GM13977 (cell line): ENCODE measurements at regions of chr1 and their contacts with region 1.

Region 1: DNA sequence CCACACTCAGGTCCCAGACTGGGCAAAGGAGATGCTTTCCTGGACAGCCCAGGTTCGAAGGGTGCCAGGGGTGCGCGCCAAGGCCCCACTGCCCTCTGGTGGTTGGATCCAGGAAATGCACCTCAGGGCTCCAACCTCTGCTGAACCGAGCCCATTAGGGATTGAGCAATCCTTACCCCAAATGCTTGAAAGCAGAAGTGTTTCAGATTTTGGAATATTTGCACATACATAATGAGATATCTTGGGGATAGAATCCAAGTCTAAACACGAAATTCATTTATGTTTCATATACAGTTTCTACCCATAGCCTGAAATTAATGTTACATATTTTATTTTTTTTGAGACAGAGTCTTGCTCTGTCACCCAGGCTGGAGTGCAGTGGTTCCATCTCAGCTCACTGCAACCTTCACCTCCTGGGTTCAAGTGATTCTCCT is 57.4 kb downstream of the SLC9A1 start:
- DNase-seq: peak; percentile 84
- CTCF ChIP-seq: peak; percentile 94

Region 2: GRCh38 chr1:27044613-27045151 is 52.8 kb before region 1 on chr1:
- in situ Hi-C with region 1: loop called (anchors 10 kb)
- DNase-seq: peak; percentile 85
- CTCF ChIP-seq: peak; percentile 96